K562 (cell line): ENCODE measurements at regions of chr6 and their contacts with region 1.

Region 1: DNA sequence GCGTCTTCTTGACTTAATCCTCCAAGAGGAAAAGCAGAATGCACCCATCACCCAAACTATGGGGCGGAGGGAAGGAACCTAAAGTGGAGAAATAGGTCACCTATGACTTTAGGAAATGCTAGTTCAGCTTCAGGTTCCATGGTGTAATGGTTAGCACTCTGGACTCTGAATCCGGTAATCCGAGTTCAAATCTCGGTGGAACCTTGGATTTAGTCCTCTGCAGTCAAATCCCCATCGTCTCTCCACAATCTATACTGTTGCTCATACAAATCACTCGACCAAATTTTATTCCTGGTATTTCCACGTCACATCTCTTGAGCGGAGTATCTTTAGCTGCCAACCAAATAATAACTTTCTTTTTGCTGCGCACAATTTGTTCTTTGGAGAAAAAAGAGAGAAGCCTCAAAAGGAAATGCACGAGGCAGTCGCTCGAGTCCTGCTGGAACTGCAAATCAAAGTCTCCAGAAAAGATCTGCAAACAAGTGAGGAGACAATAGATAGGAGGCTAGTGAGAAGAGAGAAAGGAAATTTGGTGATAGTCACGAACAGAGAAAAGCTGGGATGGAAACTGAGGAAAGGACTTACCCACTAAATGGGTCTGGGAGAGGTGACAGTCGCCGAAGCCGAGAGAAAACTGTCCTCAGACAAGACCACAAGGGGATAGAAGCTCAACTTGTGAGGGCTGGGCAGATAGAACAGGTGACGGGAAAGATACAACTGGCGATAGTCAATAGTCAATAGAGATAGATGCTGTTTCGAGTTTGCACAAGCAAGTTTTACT is 16.6 kb downstream of the POM121L2 start:
- DNase-seq: peak; percentile 65 to 93 (median 72)
- ATAC-seq: peak; percentile 67
- H3K4me3 ChIP-seq: peak overlapping the region; percentile 67
- H3K27ac ChIP-seq: peak overlapping the region; percentile 17; the same call in 2 of the 3 replicates
- H3K4me1 ChIP-seq: peaks cover 4 to 14% of the 10 kb centered on the region in 2 experiments; a peak in 3 of 5 replicates
- H3K27me3 ChIP-seq: no peaks in the 10 kb centered on the region
- CTCF ChIP-seq: no peak
- EP300 ChIP-seq: no peak; the same call in none of the 2 replicates
- POLR2A ChIP-seq: no peak
- RAD21 ChIP-seq: peak in 1 of 2 experiments; percentile 22; a peak in 2 of 4 replicates

Region 2: DNA sequence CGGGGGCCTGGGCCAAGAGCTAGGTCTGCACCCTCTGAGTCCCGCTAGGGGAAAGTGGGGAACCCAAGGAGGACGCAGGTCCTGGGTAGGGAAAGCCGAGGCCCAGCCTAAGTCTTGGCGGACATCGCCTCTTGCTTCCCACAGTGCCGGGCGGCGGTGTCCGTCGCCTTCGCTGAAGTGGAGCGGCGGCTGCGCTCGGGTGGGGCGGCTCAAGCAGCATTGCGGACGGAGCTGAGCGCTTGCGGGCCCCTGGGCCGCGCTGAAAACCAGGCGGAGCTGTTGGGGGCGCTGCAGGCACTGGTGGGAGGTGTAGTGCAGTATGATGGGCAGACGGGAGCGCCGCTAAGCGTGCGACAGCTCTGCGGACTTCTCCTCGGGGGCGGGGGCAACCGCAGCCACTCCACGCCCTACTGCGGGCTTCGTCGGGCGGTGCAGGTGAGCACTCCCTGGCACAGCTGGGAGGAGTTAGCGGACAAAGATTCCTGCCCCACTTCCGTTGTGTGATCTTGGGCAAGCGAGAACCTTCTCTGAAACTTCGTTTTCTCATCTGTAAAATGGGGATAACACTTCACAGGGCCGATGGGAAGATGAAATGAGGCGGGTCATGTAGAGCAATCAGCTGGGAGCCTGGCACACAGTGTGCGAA is 43.8 kb before region 1 on chr6:
- CTCF ChIA-PET with region 1: no interaction called
- POLR2A ChIA-PET with region 1: interaction called, 13 read pairs
- in situ Hi-C with region 1: no loop called
- intact Hi-C with region 1: no loop called
- DNase-seq: peak; percentile 93 to 97 (median 95)
- ATAC-seq: peak; percentile 94
- H3K4me3 ChIP-seq: peak overlapping the region; percentile 89
- H3K27ac ChIP-seq: peak overlapping the region; percentile 81
- H3K4me1 ChIP-seq: peaks cover 25 to 30% of the 10 kb centered on the region in 2 experiments; a peak in 4 of 5 replicates
- H3K27me3 ChIP-seq: no peaks in the 10 kb centered on the region
- CTCF ChIP-seq: peak; percentile 87 to 98 (median 95)
- EP300 ChIP-seq: peak; percentile 3; the same call in 1 of the 2 replicates
- POLR2A ChIP-seq: peak; percentile 80
- RAD21 ChIP-seq: peak; percentile 71 to 79

Region 3: DNA sequence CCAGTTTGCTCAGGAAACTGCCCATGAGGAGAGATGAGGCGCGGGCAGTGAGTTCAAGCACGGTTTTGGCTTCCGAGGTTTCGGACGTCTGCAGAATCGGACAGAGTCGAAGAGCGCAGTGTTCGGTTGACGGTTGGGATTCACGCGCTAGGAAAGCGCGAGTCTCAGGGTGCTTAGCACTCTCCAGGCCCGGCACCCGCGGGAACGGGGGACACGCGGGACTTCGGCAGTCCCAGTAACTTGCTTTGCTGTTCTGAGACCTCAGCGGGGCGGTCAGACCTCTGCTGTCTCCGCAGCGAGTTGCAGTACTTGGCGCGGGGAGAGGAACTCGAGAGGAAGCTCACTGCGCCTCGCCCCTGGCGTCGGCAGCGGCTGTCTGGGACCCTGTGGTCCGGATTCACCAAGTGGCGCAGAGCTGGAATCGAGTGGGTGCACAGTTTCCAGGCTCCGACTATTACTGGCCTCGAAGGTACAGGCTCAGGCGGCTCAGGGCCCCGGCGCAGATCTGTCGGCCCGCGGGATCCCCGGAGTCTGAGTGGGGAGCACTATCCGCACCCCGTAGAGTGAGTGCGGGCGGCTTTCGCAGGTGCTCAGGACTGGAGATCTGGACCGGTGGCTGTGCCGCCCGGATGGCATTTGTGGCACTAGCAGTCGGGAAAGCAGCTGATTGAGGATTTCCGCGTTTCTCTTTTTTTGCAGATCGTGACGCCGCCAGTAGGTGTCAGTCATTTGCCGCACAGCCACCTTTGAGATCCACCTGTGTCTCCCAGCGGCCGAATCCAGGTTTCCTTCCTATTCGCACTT is 16.9 kb after region 1 on chr6 and contains the start of gene POM121L2:
- CTCF ChIA-PET with region 1: no interaction called
- POLR2A ChIA-PET with region 1: interaction called, 10 read pairs
- in situ Hi-C with region 1: no loop called
- intact Hi-C with region 1: no loop called
- DNase-seq: no peak
- ATAC-seq: no peak
- H3K4me3 ChIP-seq: no peak within 1 kb of the TSS
- H3K27ac ChIP-seq: no peak within 1 kb of the TSS
- H3K4me1 ChIP-seq: peaks cover 0 to 9% of the 10 kb centered on the region in 2 experiments; a peak in 1 of 5 replicates
- H3K27me3 ChIP-seq: no peaks in the 10 kb centered on the region
- CTCF ChIP-seq: 0 out of 6 replicates have a peak, but pooled peaks of 1 of the 3 experiments have one; percentile 16
- EP300 ChIP-seq: no peak
- POLR2A ChIP-seq: no peak
- RAD21 ChIP-seq: no peak
- polyA plus RNA-seq, gene POM121L2: 0.23 to 0.45 TPM

Region 4: DNA sequence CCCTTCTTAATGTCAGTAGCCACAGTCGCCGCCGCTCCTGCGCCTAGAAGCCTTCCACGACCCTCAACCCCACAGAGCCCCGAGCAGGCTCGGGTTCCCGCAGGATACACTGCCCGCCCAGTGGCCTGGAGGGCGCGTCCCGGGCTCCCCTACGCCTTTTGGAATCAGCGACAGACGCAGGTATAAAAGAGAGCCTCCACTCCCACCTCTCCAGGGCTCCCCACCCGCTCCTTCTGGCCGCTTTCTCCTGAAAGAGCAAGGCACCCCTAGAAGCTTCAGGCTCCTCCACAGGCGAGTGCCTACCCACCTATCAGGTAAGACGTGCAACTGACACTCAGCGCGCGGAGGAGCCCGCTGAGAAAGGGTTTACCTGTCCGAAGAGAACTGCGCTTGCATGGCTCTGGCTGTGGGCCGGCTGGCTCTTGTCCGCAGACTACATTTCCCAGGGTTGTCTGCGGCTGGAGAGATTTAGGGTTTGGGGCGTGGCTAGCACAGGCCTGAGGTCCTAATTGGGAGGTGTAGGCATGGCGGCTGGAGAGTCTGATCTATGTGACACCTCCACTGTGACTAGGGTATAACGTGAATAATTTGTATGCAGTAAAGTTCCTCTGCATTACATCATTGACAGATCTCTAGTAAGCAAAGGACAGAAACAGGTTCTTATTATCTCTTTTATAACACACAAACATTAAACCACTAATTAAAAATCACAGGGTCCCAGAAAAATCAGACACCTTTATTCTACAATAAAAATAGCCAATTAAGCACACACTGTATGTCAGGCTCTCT is 79.5 kb after region 1 on chr6:
- CTCF ChIA-PET with region 1: no interaction called
- POLR2A ChIA-PET with region 1: interaction called, 3 read pairs
- in situ Hi-C with region 1: no loop called
- intact Hi-C with region 1: loop called (anchors 5 kb)
- DNase-seq: peak; percentile 88 to 95 (median 90)
- ATAC-seq: peak; percentile 99
- H3K4me3 ChIP-seq: peak overlapping the region; percentile 66
- H3K27ac ChIP-seq: peak overlapping the region; percentile 70
- H3K4me1 ChIP-seq: peaks cover 3 to 10% of the 10 kb centered on the region in 2 experiments; a peak in 3 of 5 replicates
- H3K27me3 ChIP-seq: no peaks in the 10 kb centered on the region
- CTCF ChIP-seq: 0 out of 6 replicates have a peak, but pooled peaks of 1 of the 3 experiments have one; percentile 3
- EP300 ChIP-seq: no peak
- POLR2A ChIP-seq: peak; percentile 62; the same call in 1 of the 2 replicates
- RAD21 ChIP-seq: no peak

Region 5: GRCh38 chr6:27479319-27480182 is 184.1 kb after region 1 on chr6:
- CTCF ChIA-PET with region 1: no interaction called
- POLR2A ChIA-PET with region 1: interaction called, 4 read pairs
- in situ Hi-C with region 1: no loop called
- intact Hi-C with region 1: loop called (anchors 2 kb)
- DNase-seq: peak; percentile 57 to 89 (median 66)
- ATAC-seq: peak; percentile 76
- H3K4me3 ChIP-seq: peak overlapping the region; percentile 64
- H3K27ac ChIP-seq: peak overlapping the region; percentile 85
- H3K4me1 ChIP-seq: peaks cover 4 to 8% of the 10 kb centered on the region in 2 experiments; a peak in 2 of 5 replicates
- H3K27me3 ChIP-seq: no peaks in the 10 kb centered on the region
- CTCF ChIP-seq: 0 out of 6 replicates have a peak, but pooled peaks of 1 of the 3 experiments have one; percentile 5
- EP300 ChIP-seq: peak; percentile 34
- POLR2A ChIP-seq: peak; percentile 54; the same call in 1 of the 2 replicates
- RAD21 ChIP-seq: no peak; a peak in 2 of 4 replicates

Region 6: DNA sequence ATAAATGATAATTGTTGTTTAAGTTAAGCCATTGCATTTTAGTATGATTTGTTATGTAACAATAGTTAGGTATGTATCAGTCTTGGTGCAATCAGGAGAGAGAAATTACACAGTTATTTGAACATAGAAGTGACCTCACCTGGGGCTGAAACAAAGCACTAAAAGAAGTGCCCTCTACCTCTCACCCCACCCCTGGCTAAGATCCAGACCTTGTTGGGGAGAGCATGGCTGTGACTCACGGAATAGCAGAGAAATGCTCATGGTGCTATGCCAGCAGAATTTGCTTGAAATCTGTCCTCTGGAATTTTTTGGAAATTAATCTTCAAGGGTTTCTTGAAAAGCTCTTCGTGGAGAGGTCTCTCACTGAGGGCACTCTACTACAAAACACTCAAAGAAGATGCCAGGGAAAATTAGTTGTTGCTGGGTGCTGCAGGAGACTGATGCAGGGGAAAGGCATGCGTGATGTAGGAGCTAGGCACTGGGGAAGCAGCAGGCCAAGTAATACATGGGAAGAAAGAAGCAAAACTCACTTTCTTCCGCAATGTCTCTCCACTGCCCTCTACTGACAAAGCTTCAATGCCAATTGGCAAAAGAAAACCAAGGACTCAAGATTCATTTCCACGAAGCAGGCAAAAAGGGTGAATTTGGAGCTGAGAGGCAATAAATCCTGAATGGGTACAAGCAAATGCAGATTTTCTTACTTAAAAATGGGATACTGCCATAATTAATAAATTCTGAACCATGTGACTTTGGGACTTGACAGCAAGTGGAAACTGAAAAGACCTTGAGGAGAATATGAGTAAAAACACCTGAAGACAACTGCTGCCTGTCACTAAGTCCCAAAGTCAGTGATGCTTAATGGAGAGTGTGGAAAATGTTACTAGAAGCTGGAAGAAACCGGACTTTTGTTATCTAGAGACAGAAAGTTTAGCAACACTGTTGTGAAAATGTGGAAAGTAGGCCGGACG is 313.7 kb after region 1 on chr6:
- CTCF ChIA-PET with region 1: no interaction called
- POLR2A ChIA-PET with region 1: no interaction called
- in situ Hi-C with region 1: no loop called
- intact Hi-C with region 1: loop called (anchors 2 kb)
- DNase-seq: peak in 3 of 4 experiments; percentile 34 to 86 (median 56)
- ATAC-seq: peak; percentile 62
- H3K4me3 ChIP-seq: no peak overlapping the region
- H3K27ac ChIP-seq: no peak overlapping the region
- H3K4me1 ChIP-seq: peaks cover 1 to 13% of the 10 kb centered on the region in 2 experiments; a peak in 4 of 5 replicates
- H3K27me3 ChIP-seq: no peaks in the 10 kb centered on the region
- CTCF ChIP-seq: peak; percentile 80 to 95 (median 88)
- EP300 ChIP-seq: peak; percentile 30; the same call in 1 of the 2 replicates
- POLR2A ChIP-seq: no peak
- RAD21 ChIP-seq: peak; percentile 81 to 92